GM12878 (cell line): ENCODE measurements at regions of chr3 and their contacts with region 1.

Region 1: DNA sequence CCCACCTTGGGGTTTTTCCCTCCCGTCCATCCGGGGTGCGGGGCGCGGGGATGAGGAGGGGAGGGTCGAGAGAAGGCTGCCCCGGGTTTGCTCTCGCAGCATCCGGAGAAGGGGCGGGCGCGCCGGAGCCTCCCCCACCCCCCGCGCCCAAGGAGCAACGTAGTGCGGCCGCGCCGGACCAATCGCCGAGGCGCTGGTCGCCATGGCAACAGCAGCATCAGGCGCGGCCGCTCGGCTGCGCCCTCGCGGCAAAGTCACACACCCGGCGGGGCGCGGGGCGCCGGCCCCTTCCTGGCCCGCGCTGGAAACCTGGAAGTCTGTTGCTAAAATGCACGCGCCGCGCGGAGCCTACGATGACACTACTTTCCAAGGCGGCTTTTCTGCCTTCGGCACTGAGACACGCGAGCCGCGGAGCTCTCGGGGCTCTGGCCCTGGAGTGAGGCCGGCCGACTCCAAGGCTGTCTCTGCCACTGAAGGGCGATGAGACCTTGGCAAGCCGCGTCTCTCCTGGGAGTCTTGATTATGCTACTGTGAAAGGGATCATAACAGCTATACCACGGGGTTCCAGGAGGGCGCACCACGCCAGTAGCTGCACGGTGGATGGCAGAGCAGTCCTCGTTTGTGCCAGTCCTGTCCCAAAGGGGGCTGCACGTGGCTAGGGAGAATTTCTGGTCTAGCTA is at the start of gene IQSEC1:
- DNase-seq: no peak
- ATAC-seq: peak; percentile 67
- H3K4me3 ChIP-seq: peak within 1 kb of the TSS; percentile 77
- H3K27ac ChIP-seq: no peak within 1 kb of the TSS
- H3K4me1 ChIP-seq: peaks cover 45% of the 10 kb centered on the region
- H3K27me3 ChIP-seq: peaks cover 0 to 11% of the 10 kb centered on the region in 2 experiments; a peak in 2 of 4 replicates
- CTCF ChIP-seq: 0 out of 6 replicates have a peak, but pooled peaks of 2 of the 3 experiments have one; percentile 1 to 3
- EP300 ChIP-seq: no peak
- POLR2A ChIP-seq: no peak
- RAD21 ChIP-seq: no peak
- polyA plus RNA-seq, gene IQSEC1: 0.92 to 2.0 TPM

Region 2: GRCh38 chr3:12994607-12995388 is 78.7 kb before region 1 on chr3:
- CTCF ChIA-PET with region 1: interaction called, 5 read pairs
- POLR2A ChIA-PET with region 1: interaction called, 3 read pairs
- RAD21 ChIA-PET with region 1: interaction called, 6 read pairs
- SMC1A ChIA-PET with region 1: no interaction called
- in situ Hi-C with region 1: no loop called
- intact Hi-C with region 1: loop called (anchors 5 kb)
- DNase-seq: no peak
- ATAC-seq: peak; percentile 90
- H3K4me3 ChIP-seq: peak overlapping the region; percentile 89
- H3K27ac ChIP-seq: peak overlapping the region; percentile 79
- H3K4me1 ChIP-seq: peaks cover 34% of the 10 kb centered on the region
- H3K27me3 ChIP-seq: no peaks in the 10 kb centered on the region
- CTCF ChIP-seq: peak; percentile 87 to 90 (median 90)
- EP300 ChIP-seq: no peak
- POLR2A ChIP-seq: peak; percentile 75
- RAD21 ChIP-seq: peak; percentile 61

Region 3: DNA sequence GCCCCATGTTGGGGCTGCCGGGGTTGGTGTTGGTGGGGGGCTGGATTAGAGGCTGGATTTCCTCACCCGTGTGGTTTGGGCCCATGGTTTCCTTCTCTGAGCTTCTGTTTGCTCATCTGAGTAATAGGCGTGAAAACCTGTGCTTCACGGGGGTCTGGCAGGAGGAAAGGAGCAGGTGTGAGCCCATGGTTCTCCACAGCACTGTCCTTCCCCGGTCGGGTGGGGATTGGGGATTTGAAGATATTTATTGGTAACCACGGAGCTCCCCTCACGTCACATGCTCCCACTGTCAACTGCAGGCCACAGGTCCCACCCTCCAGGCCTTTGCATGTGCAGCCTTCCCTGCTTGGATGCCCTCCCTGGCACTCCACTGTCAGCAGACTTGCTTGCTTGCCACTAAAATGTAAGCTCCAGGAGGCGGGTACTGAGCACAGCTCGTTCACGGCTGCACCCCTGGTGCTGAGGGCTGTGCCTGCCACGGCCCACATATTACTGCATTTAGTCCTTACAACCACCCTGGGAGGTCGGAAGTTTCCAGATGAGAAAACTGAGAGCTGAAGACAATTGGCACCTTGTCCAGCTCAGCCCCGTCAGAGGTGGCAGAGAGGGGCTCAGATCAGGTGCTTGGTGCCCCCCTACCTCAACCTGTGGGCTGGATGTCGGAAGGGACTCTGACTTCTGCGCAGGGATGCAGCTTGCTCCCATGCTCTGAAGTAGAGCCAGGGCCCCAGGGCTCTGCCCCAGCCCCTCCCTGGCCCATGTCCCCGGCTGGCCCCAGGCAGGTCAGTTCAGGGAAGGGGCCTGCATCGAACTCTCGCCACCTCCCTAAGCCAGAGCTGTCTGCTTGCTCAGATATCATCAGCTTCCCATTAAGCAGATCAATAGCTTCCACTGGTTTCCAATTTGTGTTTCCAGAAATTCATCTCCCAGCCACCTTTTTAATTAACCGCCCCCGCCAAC is 29.2 kb after region 1 on chr3:
- CTCF ChIA-PET with region 1: no interaction called
- POLR2A ChIA-PET with region 1: no interaction called
- RAD21 ChIA-PET with region 1: no interaction called
- SMC1A ChIA-PET with region 1: no interaction called
- in situ Hi-C with region 1: no loop called
- intact Hi-C with region 1: no loop called
- DNase-seq: no peak
- ATAC-seq: no peak
- H3K4me3 ChIP-seq: no peak overlapping the region
- H3K27ac ChIP-seq: no peak overlapping the region
- H3K4me1 ChIP-seq: peaks cover 3% of the 10 kb centered on the region; the same call in 1 of the 2 replicates
- H3K27me3 ChIP-seq: no peaks in the 10 kb centered on the region
- CTCF ChIP-seq: no peak
- EP300 ChIP-seq: no peak
- POLR2A ChIP-seq: no peak
- RAD21 ChIP-seq: no peak